ENCODE measurements at regions of chr1 and their contacts with region 1.

Region 1: GRCh38 chr1:209692745-209693504 is 11.7 kb upstream of the HSD11B1 start:
- DNase-seq: peak; percentile 65
- CTCF ChIP-seq: peak; percentile 65

Region 2: DNA sequence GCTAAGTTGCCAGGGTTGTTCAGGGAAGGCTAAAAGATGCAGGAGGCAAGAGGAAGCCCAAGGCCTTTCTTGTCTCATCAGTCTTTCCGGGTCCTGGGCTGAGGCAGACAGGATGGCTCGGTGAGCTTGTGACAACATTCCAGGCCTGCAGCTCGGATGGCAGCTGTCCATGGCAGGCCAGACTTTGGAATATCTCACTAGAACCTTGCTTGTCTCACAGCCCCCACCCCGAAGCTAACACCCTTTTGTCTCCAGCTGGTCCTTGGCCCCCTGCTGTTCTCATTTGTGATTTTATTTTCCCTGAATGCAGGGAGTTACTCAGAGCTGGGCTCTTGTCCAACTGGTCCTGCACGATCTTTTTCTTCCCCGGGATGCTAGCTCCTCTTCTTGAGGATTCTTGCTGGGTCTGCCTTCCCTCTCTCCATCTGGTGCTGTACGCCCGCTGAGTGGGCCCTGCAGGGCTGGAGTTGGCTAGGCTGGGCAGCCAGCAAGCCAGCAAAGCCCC is 586.6 kb before region 1 on chr1:
- CTCF ChIA-PET with region 1: no interaction called
- POLR2A ChIA-PET with region 1: no interaction called
- DNase-seq: no peak
- CTCF ChIP-seq: no peak

Region 3: DNA sequence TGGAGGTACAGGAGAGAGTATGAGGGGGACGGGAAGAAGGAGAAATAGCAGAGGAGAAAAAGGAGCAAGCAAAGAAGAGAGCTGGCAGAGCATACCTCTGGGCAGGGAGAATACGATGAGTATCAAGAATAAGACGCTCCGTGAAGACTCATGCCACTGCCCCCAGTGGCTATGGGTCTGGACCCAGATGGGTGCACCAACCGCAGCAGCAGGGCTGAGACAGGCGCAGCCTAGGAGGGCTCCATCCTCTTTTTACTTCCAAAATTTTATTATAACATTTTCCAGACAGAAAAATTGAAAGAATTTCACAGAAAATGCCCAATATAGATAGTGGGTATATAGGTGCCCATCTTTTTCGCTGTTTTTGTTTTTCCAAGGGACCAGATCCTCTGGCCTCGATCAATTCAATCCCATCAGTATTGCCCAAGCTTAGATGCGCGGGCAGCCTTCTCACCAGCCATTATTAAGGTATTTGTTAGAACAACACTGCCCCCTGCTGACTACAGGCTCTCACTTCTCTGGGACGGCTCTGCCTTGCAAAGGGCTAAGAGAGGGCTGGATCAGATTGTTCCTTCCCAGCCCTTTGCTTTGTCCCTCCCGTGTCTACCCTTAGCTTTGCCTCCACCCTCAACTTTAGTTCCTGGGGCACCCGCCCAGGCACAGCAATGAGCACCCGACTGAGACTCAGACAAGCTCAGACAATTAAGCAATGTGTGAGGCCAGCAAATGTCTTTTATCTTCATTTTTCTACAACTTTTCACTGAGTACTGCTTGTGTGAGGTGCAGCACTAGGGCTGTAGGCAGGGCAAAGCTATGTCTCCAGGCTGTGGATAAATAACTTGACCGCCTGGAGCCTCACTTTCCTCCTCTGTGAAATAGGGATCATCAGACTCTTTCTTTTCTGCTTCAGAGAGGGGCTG is 126.9 kb before region 1 on chr1:
- CTCF ChIA-PET with region 1: interaction called, 48 read pairs
- POLR2A ChIA-PET with region 1: no interaction called
- DNase-seq: peak; percentile 70
- CTCF ChIP-seq: peak; percentile 78

Region 4: GRCh38 chr1:209585672-209586071 is 107.3 kb before region 1 on chr1:
- CTCF ChIA-PET with region 1: interaction called, 27 read pairs
- POLR2A ChIA-PET with region 1: no interaction called
- DNase-seq: no peak
- CTCF ChIP-seq: no peak

Region 5: GRCh38 chr1:209651148-209651547 is 41.8 kb before region 1 on chr1:
- CTCF ChIA-PET with region 1: interaction called, 26 read pairs
- POLR2A ChIA-PET with region 1: no interaction called
- DNase-seq: peak; percentile 68
- CTCF ChIP-seq: no peak

Region 6: GRCh38 chr1:209674957-209675564 is 17.9 kb before region 1 on chr1 and contains the start of gene G0S2:
- CTCF ChIA-PET with region 1: interaction called, 20 read pairs
- POLR2A ChIA-PET with region 1: no interaction called
- DNase-seq: no peak
- CTCF ChIP-seq: no peak

Region 7: DNA sequence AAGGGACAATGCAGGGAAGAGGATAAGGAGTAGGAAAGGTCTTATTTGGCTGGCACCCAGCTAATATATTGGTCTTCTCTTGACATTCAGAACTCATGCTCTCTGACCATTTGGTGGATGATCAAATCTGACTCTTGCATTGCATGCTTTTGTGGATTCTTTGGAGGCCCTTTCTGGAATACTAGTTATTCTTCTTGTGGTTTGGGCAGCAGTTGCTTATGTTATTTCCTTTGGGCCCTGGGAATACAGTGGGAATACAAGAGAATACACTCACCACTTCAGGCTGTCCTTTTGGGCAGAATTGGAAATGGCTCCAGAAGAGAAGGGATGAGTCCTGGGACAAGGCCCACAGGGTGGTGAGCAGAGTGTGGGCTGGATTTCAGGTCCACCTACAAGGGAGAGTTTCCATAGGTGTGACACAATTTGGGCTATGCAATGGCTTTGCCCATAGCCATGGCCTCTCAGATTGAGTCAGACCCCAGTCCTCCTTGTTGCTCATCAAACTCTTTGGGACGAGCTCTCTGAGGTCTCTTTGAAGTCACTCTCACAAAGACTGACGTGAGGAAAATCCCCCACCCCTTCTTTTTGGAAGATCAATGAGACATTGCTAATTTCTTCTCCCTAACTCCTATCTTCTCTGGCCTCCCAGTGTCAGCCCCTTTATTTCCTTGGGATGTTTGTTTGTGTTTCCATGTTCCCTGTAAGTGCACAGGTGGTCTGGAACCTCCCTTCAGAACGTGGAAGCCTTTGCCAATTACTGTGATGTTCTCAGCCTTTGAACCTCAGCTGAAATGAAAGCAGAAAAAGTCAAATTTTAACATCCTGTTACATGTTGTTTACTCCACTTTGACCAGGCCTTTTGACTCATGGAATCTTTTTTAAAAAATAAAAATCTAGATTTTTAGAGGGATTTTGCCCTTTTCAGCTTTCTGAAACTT is 31.1 kb after region 1 on chr1:
- CTCF ChIA-PET with region 1: interaction called, 11 read pairs
- POLR2A ChIA-PET with region 1: no interaction called
- DNase-seq: peak; percentile 27
- CTCF ChIP-seq: no peak

Measured in GM10248 (cell line).